ENCODE measurements at regions of chr2 and their contacts with region 1.

Region 1: DNA sequence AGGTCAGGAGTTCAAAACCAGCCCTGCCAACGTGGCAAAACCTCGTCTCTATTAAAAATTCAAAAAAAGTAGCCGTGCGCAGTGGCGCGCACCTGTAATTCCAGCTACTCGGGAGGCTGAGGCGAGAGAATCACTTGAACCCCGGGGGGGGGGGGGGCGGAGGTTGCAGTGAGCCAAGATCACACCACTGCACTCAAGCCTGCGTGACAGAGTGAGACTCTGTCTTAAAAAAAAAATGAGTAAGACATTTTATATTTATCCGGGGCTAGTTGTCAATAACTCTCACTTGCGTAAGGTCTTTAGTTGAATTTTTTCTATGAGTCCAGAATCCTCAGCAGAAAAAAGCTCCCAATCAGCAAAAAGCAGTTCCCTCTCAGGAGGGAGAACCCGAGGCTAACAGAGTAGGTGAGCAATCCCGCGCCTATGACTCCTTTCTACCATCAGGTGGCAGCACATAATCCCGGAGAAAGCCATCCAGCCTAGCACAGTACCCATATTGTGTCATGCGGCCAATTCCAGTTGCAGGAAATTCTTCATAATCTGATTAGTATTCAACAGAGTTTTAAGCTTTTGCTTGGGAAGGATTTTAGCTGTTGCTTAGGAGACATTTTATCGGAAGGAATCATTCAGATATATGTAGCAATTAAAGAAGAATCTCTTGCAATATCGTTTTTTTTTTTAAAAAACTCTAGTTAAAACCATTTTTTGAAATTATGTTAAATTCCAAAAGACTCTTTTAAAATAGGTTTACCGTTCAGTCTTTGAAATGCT is 11.9 kb upstream of the CRYGA start:
- H3K4me3 Mint-ChIP-seq: no peak overlapping the region
- H3K27ac Mint-ChIP-seq: peak overlapping the region; percentile 73
- H3K4me1 Mint-ChIP-seq: peaks cover 42% of the 10 kb centered on the region
- H3K27me3 Mint-ChIP-seq: no peaks in the 10 kb centered on the region

Region 2: GRCh38 chr2:208101716-208102631 is 73.3 kb before region 1 on chr2:
- intact Hi-C with region 1: loop called (anchors 10 kb)
- H3K4me3 Mint-ChIP-seq: peak overlapping the region; percentile 20
- H3K27ac Mint-ChIP-seq: no peak overlapping the region
- H3K4me1 Mint-ChIP-seq: peaks cover 30% of the 10 kb centered on the region
- H3K27me3 Mint-ChIP-seq: peaks cover 2% of the 10 kb centered on the region

Region 3: GRCh38 chr2:208265801-208266552 is 90.7 kb after region 1 on chr2 and contains the start of gene PIKFYVE:
- intact Hi-C with region 1: loop called (anchors 5 kb)
- H3K4me3 Mint-ChIP-seq: peak within 1 kb of the TSS; percentile 91
- H3K27ac Mint-ChIP-seq: peak within 1 kb of the TSS; percentile 94
- H3K4me1 Mint-ChIP-seq: peaks cover 43% of the 10 kb centered on the region
- H3K27me3 Mint-ChIP-seq: no peaks in the 10 kb centered on the region